K562 (cell line): ENCODE measurements at regions of chr4 and their contacts with region 1.

Region 1: GRCh38 chr4:31995943-31996901 is 1276.1 kb downstream of the PCDH7 start:
- DNase-seq: peak; percentile 18 to 74 (median 27)
- ATAC-seq: peak; percentile 86
- H3K4me3 ChIP-seq: peak overlapping the region; percentile 62
- H3K27ac ChIP-seq: peak overlapping the region; percentile 78
- H3K4me1 ChIP-seq: peaks cover 0 to 8% of the 10 kb centered on the region in 2 experiments; a peak in 4 of 5 replicates
- H3K27me3 ChIP-seq: no peaks in the 10 kb centered on the region
- CTCF ChIP-seq: peak in 2 of 3 experiments; percentile 21 to 25; a peak in 2 of 6 replicates
- EP300 ChIP-seq: no peak
- POLR2A ChIP-seq: peak; percentile 58
- RAD21 ChIP-seq: peak; percentile 19 to 34; a peak in 2 of 4 replicates

Region 2: DNA sequence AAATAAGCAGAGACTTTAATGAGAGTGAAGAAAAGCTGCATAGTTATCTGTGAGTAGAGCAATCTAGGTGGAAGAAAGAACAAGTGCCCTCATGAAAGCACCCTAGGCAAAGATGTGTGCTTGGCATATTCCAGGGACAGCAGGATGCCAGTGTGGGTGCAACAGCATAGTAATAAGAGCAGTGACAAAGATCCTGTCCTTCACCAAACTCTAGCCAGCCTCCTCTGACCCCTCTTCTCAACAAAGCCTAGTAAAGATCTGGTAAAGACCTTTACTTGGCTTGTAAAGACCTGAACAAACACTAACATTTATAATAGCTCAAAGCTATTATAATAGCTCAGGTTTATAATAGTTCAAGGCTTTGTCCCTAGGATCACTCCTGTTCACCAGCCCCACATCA is 540.6 kb before region 1 on chr4:
- CTCF ChIA-PET with region 1: no interaction called
- POLR2A ChIA-PET with region 1: no interaction called
- in situ Hi-C with region 1: no loop called
- intact Hi-C with region 1: no loop called
- DNase-seq: no peak
- ATAC-seq: no peak
- H3K4me3 ChIP-seq: no peak overlapping the region
- H3K27ac ChIP-seq: no peak overlapping the region
- H3K4me1 ChIP-seq: no peaks in the 10 kb centered on the region
- H3K27me3 ChIP-seq: no peaks in the 10 kb centered on the region
- CTCF ChIP-seq: no peak
- EP300 ChIP-seq: no peak
- POLR2A ChIP-seq: no peak
- RAD21 ChIP-seq: no peak

Region 3: GRCh38 chr4:32042486-32043247 is 46.4 kb after region 1 on chr4:
- CTCF ChIA-PET with region 1: no interaction called
- POLR2A ChIA-PET with region 1: no interaction called
- in situ Hi-C with region 1: no loop called
- intact Hi-C with region 1: loop called (anchors 5 kb)
- DNase-seq: no peak
- ATAC-seq: no peak
- H3K4me3 ChIP-seq: no peak overlapping the region
- H3K27ac ChIP-seq: no peak overlapping the region
- H3K4me1 ChIP-seq: no peaks in the 10 kb centered on the region
- H3K27me3 ChIP-seq: no peaks in the 10 kb centered on the region
- CTCF ChIP-seq: no peak
- EP300 ChIP-seq: no peak
- POLR2A ChIP-seq: no peak
- RAD21 ChIP-seq: no peak; a peak in 1 of 4 replicates

Region 4: DNA sequence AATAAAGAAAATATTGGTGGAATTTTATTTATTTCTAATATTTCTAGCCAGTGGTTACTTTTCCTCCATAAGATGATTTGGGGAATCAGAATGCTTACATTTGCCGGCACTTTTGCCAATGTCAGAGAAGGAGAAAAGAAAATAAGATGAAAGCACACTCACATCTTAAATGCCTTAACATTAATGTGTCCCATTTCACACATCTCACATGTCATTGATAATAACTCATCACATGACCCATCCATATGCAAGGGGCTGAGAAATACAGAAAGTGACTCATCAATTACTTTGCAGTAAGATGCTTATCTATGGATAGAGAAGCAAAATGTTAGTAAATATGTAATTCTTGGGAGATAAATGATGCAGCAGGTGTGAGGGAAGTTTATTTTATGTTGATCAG is 254.9 kb after region 1 on chr4:
- CTCF ChIA-PET with region 1: no interaction called
- POLR2A ChIA-PET with region 1: no interaction called
- in situ Hi-C with region 1: no loop called
- intact Hi-C with region 1: loop called (anchors 10 kb)
- DNase-seq: no peak
- ATAC-seq: no peak
- H3K4me3 ChIP-seq: no peak overlapping the region
- H3K27ac ChIP-seq: no peak overlapping the region
- H3K4me1 ChIP-seq: no peaks in the 10 kb centered on the region
- H3K27me3 ChIP-seq: no peaks in the 10 kb centered on the region
- CTCF ChIP-seq: no peak
- EP300 ChIP-seq: no peak
- POLR2A ChIP-seq: no peak
- RAD21 ChIP-seq: no peak